ENCODE measurements at regions of chr5 and their contacts with region 1.

Region 1: GRCh38 chr5:80407735-80408482 is at the start of gene ZFYVE16:
- DNase-seq: peak; percentile 94 to 95
- H3K4me3 ChIP-seq: peak within 1 kb of the TSS; percentile 83 to 97 (median 97)
- H3K27ac ChIP-seq: peak within 1 kb of the TSS; percentile 96 to 99
- H3K4me1 ChIP-seq: no peaks in the 10 kb centered on the region
- H3K27me3 ChIP-seq: no peaks in the 10 kb centered on the region
- CTCF ChIP-seq: peak; percentile 37 to 59 (median 37)
- POLR2A ChIP-seq: peak; percentile 84
- total RNA-seq, gene ZFYVE16: 28.0 to 61.9 (median 50.5) TPM

Region 2: GRCh38 chr5:79235634-79236363 is 1172.1 kb before region 1 on chr5 and contains the start of gene JMY:
- intact Hi-C with region 1: loop called (anchors 5 kb)
- DNase-seq: peak; percentile 77 to 86
- H3K4me3 ChIP-seq: peak within 1 kb of the TSS; percentile 84 to 97 (median 90)
- H3K27ac ChIP-seq: peak within 1 kb of the TSS; percentile 97 to 98
- H3K4me1 ChIP-seq: no peaks in the 10 kb centered on the region
- H3K27me3 ChIP-seq: no peaks in the 10 kb centered on the region
- CTCF ChIP-seq: no peak
- POLR2A ChIP-seq: no peak
- total RNA-seq, gene JMY: 15.8 to 29.9 (median 16.1) TPM

Region 3: DNA sequence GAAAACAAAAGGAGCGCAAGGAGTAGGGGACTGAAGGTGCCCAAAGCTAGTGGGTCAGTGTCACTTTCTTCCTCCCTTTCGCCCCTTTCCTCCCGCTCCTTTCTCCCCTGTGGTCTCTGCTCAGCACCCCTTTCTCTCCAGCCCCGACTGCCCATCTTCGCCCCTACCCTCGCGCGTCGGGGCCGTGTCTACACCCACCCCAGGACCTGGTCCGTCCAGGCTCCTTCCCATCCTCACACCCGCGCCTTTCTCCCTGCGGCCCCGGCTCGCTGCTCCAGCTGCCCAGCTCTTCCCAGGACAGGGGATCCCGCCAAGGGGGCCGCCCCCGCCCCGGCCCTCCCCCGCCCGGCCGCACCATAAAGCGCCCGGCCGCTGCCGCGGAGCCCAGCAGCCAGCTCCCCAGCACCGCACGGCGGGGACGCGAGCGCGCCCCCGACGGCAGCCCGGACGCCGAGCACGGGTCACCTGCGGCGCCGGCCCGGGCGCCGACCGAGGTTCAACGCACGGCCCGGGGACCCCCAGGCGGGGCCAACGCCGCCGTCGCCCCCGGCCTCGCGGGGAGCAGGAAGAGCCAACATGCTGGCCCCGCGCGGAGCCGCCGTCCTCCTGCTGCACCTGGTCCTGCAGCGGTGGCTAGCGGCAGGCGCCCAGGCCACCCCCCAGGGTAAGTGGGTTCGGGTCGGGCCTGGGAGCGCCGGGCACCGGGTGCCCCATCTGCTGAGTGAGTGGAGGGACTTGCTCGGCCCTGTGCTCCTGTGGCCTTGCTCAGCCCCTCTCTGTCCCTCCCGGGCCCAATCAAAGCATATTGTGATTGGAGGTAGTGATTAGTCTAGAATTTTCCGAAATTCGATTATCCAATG is 372.7 kb before region 1 on chr5 and contains the start of gene THBS4:
- intact Hi-C with region 1: loop called (anchors 5 kb)
- DNase-seq: no peak
- H3K4me3 ChIP-seq: peak within 1 kb of the TSS; percentile 21 to 62 (median 43)
- H3K27ac ChIP-seq: no peak within 1 kb of the TSS
- H3K4me1 ChIP-seq: peaks cover 0 to 3% of the 10 kb centered on the region in 2 donors
- H3K27me3 ChIP-seq: peaks cover 0 to 37% of the 10 kb centered on the region in 2 donors
- CTCF ChIP-seq: no peak
- POLR2A ChIP-seq: no peak
- total RNA-seq, gene THBS4: 2.0 to 6.0 (median 3.5) TPM

Region 4: GRCh38 chr5:82255844-82256243 is 1847.9 kb after region 1 on chr5:
- intact Hi-C with region 1: no loop called
- DNase-seq: no peak
- H3K4me3 ChIP-seq: no peak overlapping the region
- H3K27ac ChIP-seq: no peak overlapping the region
- H3K4me1 ChIP-seq: no peaks in the 10 kb centered on the region
- H3K27me3 ChIP-seq: no peaks in the 10 kb centered on the region
- CTCF ChIP-seq: no peak
- POLR2A ChIP-seq: no peak

Measured in breast epithelium (tissue), 4 donors.